ENCODE measurements at regions of chr12 and their contacts with region 1.

Region 1: DNA sequence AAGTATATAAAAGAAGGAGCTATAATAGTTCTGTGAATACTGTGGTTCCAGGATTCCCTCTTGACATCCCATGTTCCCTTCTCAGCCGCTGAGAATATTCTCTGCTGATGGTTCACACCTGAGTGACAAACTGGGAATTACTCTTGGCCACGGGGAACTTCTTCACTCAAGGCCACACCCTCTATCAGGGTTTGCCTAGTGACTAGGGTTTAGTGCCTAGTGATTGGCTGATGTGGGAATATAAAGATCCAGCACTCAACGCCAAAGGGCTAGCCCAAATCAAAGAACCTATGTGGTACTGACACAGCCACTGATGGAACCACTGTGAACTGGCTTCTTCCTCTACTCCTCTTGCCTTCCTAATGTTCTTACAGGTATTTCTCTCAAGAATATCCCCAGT is 248.4 kb downstream of the ASCL1 start:
- DNase-seq: no peak
- H3K4me3 ChIP-seq: no peak overlapping the region
- H3K4me3 Mint-ChIP-seq: no peak overlapping the region
- H3K27ac Mint-ChIP-seq: no peak overlapping the region
- H3K4me1 ChIP-seq: no peaks in the 10 kb centered on the region
- H3K4me1 Mint-ChIP-seq: no peaks in the 10 kb centered on the region
- H3K27me3 ChIP-seq: no peaks in the 10 kb centered on the region
- H3K27me3 Mint-ChIP-seq: no peaks in the 10 kb centered on the region
- CTCF ChIP-seq: no peak

Region 2: DNA sequence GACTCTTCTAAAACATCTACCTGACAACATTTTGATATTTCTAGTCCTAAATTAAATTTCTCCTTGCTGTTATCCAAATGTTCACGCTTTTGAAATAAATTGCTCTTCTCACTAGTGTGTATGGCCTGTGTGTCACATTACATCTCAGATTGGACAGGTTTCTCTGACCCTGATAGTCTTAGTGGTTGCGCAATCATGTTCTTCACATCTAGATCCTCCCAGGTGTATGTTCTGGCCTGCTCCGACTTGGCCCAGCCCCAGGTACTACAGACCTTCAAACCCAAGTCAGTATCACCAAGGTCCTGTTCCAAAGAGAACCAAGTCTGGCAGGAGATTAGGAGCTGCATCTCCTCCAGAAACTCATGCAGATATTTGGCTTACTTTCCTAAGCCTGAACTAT is 39.0 kb before region 1 on chr12:
- CTCF ChIA-PET with region 1: no interaction called
- POLR2A ChIA-PET with region 1: no interaction called
- intact Hi-C with region 1: no loop called
- DNase-seq: no peak
- H3K4me3 ChIP-seq: no peak overlapping the region
- H3K4me3 Mint-ChIP-seq: no peak overlapping the region
- H3K27ac Mint-ChIP-seq: no peak overlapping the region
- H3K4me1 ChIP-seq: no peaks in the 10 kb centered on the region
- H3K4me1 Mint-ChIP-seq: no peaks in the 10 kb centered on the region
- H3K27me3 ChIP-seq: no peaks in the 10 kb centered on the region
- H3K27me3 Mint-ChIP-seq: no peaks in the 10 kb centered on the region
- CTCF ChIP-seq: no peak

Region 3: DNA sequence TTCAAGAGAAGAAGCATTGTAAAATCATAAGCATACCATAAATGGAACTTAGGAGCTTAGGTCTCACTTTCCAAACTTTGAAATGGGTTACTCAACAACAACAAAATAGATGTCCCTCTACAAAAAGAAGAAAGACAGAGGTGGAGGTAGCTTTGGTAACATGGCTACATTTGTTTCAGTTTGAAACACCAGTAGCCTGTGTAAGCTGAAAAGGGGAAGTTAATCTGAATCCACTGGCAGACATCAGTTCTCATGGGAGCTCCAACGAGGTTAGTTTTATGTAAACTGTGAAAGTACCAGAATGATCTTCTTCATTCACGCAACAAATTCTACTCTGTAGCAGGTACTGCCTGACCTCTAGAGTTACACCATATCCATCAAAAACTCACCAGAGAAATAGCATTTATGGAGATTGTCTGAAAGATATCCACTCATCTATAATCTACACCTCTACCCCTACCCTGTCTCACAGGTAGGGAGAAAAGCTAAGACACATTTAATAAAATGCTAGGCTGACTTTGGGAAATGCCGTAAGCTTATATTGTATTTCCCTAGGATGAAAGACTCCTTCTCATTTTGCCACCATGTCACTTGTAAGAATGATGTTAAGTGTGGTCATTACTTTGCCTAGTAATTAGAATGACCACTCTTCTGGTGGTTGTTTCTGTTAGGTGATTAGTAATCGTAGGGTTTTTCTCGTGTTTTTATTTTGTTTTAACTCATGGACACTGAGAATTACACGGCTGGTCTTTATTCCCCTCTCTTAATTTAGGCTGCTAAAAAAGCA is 24.3 kb before region 1 on chr12:
- CTCF ChIA-PET with region 1: no interaction called
- POLR2A ChIA-PET with region 1: no interaction called
- intact Hi-C with region 1: loop called (anchors 1 kb)
- DNase-seq: no peak
- H3K4me3 ChIP-seq: no peak overlapping the region
- H3K4me3 Mint-ChIP-seq: no peak overlapping the region
- H3K27ac Mint-ChIP-seq: no peak overlapping the region
- H3K4me1 ChIP-seq: peaks cover 15% of the 10 kb centered on the region; the same call in 1 of the 2 replicates
- H3K4me1 Mint-ChIP-seq: peaks cover 7% of the 10 kb centered on the region
- H3K27me3 ChIP-seq: no peaks in the 10 kb centered on the region
- H3K27me3 Mint-ChIP-seq: no peaks in the 10 kb centered on the region
- CTCF ChIP-seq: no peak

Region 4: DNA sequence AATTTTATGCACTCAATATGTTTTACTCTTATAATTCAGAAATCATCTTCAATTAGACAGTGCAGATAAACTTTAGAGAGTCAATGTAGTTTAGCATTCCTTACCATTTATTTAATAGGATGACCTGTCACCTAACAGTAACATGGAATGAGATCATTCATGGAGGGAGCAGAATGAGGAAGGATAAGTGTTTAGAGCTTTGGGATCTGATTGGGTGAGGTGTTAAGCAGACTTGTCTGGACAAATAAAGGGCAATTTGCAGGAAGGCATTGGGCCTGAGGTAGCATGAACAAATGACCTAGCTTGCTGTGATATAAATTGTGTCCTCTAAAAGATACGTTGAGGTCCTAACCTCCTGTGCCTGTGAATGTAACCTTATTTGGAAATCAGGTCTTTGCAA is 102.5 kb after region 1 on chr12:
- CTCF ChIA-PET with region 1: no interaction called
- POLR2A ChIA-PET with region 1: no interaction called
- intact Hi-C with region 1: no loop called
- DNase-seq: no peak
- H3K4me3 ChIP-seq: no peak overlapping the region
- H3K4me3 Mint-ChIP-seq: no peak overlapping the region
- H3K27ac Mint-ChIP-seq: no peak overlapping the region
- H3K4me1 ChIP-seq: no peaks in the 10 kb centered on the region
- H3K4me1 Mint-ChIP-seq: no peaks in the 10 kb centered on the region
- H3K27me3 ChIP-seq: no peaks in the 10 kb centered on the region
- H3K27me3 Mint-ChIP-seq: no peaks in the 10 kb centered on the region
- CTCF ChIP-seq: no peak

Measured in Caco-2 (cell line).